CD8-positive, alpha-beta T cell (primary cell): ENCODE measurements at regions of chr6 and their contacts with region 1.

Region 1: GRCh38 chr6:96994660-96995059 is 70.1 kb downstream of the KLHL32 start:
- DNase-seq: no peak
- ATAC-seq: no peak
- H3K4me3 ChIP-seq: no peak overlapping the region
- H3K4me3 Mint-ChIP-seq: no peak overlapping the region
- H3K27ac ChIP-seq: no peak overlapping the region
- H3K27ac Mint-ChIP-seq: no peak overlapping the region
- H3K4me1 ChIP-seq: no peaks in the 10 kb centered on the region
- H3K4me1 Mint-ChIP-seq: no peaks in the 10 kb centered on the region
- H3K27me3 ChIP-seq: no peaks in the 10 kb centered on the region
- H3K27me3 Mint-ChIP-seq: no peaks in the 10 kb centered on the region
- CTCF ChIP-seq: no peak

Region 2: DNA sequence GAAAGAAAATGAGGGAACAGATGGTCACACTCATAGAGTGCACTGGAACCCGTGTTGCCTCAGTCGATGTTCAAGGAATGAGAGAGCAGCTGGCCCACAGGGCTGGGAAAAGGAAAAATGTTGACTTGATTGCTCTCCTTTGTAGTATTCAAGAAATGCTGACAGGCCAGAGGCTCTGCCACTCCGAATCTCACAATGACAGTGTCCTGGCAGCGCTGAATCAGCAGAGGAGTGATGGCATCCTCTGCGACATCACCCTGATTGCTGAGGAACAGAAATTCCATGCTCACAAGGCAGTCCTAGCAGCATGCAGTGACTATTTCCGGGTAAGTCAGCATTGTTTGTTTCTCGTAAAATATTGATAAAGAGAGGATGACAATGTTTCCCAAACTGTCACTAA is 18.8 kb before region 1 on chr6:
- CTCF ChIA-PET with region 1: no interaction called
- POLR2A ChIA-PET with region 1: no interaction called
- intact Hi-C with region 1: loop called in 1 of 2 experiments (anchors 1 kb)
- DNase-seq: no peak
- ATAC-seq: no peak
- H3K4me3 ChIP-seq: no peak overlapping the region
- H3K4me3 Mint-ChIP-seq: no peak overlapping the region
- H3K27ac ChIP-seq: no peak overlapping the region
- H3K27ac Mint-ChIP-seq: no peak overlapping the region
- H3K4me1 ChIP-seq: no peaks in the 10 kb centered on the region
- H3K4me1 Mint-ChIP-seq: no peaks in the 10 kb centered on the region
- H3K27me3 ChIP-seq: no peaks in the 10 kb centered on the region
- H3K27me3 Mint-ChIP-seq: no peaks in the 10 kb centered on the region
- CTCF ChIP-seq: no peak